ENCODE measurements at regions of chr6 and their contacts with region 1.

Region 1: DNA sequence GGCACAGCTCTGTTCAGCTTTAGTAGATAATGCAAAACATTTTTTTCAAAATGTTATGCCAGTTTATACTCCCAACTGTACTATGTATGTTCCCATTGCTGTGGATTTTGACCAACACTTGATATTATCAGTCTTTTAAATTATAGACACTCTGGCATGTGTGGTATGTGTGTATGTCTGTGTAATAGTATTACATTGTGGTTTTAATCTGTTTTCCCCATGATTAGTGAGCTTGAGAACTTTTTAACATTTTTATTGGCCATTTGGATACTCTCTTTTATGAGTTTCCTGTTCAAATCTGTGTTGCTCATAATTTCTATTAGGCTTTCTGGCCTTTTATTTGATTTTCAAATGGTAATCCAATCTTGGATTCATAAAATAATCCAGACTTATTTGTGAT is 69.2 kb upstream of the TXNDC5 start:
- DNase-seq: no peak
- CTCF ChIP-seq: no peak

Region 2: GRCh38 chr6:7899101-7899888 is 80.5 kb before region 1 on chr6:
- in situ Hi-C with region 1: loop called (anchors 10 kb)
- DNase-seq: peak; percentile 58
- CTCF ChIP-seq: peak; percentile 48

Region 3: DNA sequence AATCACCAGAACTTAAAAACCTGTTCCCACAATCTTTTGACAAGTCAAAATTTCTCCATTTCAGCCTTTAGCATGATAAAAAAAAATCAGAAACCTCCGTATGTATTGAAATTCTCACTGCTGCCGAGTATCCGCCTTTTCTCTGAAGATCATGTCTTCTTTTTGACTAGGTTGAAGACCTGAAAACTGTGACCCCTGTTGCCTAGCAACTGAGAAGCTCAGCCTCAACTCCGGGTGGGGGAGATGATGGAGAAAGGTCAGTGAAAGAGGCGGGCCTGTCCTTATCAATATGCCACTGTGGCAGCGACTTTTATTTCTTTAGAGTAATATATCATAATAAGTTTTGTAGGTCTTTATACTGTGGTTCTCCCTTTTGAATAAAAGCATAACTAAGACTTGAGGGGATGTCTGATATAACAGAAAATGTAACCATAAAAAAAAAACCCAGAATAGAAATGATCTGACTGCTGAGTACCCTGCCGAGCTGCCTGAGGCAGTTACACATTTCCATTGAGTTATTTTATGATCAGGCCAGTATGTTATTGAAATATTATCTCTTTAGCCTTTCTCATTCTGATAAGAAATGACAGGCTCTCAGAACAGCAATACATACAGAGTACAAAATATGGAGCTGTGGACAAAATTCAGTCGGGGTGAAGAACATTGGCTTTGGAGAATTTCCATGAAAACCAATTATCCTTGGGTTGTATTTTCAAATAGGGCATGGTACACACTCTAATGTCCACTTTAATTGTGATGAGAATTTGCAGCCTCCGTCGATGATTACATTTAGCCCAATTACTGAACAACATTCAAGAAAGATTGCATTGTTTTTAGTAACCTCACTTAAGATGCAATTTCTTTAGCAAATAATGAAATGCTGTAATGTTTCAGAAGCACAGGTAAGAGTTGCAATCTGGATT is 259.2 kb after region 1 on chr6:
- in situ Hi-C with region 1: no loop called
- DNase-seq: no peak
- CTCF ChIP-seq: no peak

Measured in GM13977 (cell line).